AG04449 (cell line): ENCODE measurements at regions of chr11 and their contacts with region 1.

Region 1: GRCh38 chr11:22787551-22788162 is 41.9 kb downstream of the SVIP start:
- DNase-seq: peak; percentile 14
- H3K4me3 ChIP-seq: no peak overlapping the region
- CTCF ChIP-seq: peak; percentile 54

Region 2: GRCh38 chr11:22337596-22338485 is 449.8 kb before region 1 on chr11 and contains the start of gene SLC17A6:
- CTCF ChIA-PET with region 1: interaction called, 36 read pairs
- POLR2A ChIA-PET with region 1: no interaction called
- DNase-seq: no peak
- H3K4me3 ChIP-seq: no peak within 1 kb of the TSS
- CTCF ChIP-seq: no peak

Region 3: DNA sequence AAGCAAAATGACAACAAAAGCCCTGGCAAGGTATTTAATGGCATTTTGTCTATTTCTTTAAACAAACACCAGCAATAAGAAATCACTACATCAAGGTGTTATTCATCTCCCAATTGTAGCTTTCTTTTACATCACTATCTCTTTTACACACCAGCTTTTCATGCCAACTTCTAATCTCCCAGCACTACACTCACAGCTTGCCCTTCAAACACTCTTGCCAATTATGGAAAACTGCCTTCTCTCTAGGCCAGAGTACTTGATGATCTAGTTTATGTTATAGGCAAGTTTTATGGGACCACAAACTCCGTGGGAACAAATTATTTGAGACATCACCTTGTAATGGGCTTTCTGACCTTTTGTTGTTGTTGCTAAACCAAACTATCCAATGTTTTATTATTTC is 19.4 kb before region 1 on chr11:
- CTCF ChIA-PET with region 1: interaction called, 10 read pairs
- POLR2A ChIA-PET with region 1: no interaction called
- DNase-seq: no peak
- H3K4me3 ChIP-seq: no peak overlapping the region
- CTCF ChIP-seq: no peak

Region 4: GRCh38 chr11:22774716-22775115 is 12.9 kb before region 1 on chr11:
- CTCF ChIA-PET with region 1: interaction called, 12 read pairs
- POLR2A ChIA-PET with region 1: no interaction called
- DNase-seq: no peak
- H3K4me3 ChIP-seq: no peak overlapping the region
- CTCF ChIP-seq: no peak